ENCODE measurements at regions of chr20 and their contacts with region 1.

Region 1: GRCh38 chr20:32789896-32790750 is 27.9 kb downstream of the DNMT3B start:
- DNase-seq: peak; percentile 89
- CTCF ChIP-seq: peak; percentile 99

Region 2: GRCh38 chr20:32535953-32536823 is 253.9 kb before region 1 on chr20:
- in situ Hi-C with region 1: loop called (anchors 25 kb)
- DNase-seq: peak; percentile 92
- CTCF ChIP-seq: no peak

Region 3: DNA sequence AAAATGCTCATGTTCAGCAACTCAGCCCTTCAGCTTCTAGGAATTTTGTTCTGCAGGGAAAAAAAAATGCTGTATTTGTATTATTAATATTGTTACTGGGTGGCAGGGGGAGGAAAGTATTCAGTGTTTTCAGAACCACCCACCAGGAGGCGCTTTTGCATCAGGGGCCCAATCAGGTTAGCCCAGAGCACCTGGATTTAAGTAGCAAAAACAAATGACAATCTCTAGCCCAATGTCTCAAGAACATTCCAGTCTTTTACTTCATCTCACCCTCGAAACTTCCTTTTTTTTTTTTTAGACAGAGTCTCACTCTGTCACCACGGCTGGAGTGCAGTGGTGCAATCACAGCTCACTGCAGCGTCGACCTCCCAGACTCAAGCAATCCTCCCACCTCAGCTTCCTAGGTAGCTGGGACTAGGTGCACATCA is 115.7 kb before region 1 on chr20:
- in situ Hi-C with region 1: loop called (anchors 10 kb)
- DNase-seq: peak; percentile 79
- CTCF ChIP-seq: peak; percentile 75